ENCODE measurements at regions of chr1 and their contacts with region 1.

Region 1: GRCh38 chr1:23777979-23778814 is at the start of gene PITHD1:
- DNase-seq: peak; percentile 75 to 79
- H3K4me3 ChIP-seq: peak within 1 kb of the TSS; percentile 61
- H3K4me3 Mint-ChIP-seq: peak within 1 kb of the TSS; percentile 85
- H3K27ac Mint-ChIP-seq: peak within 1 kb of the TSS; percentile 94
- H3K4me1 ChIP-seq: peaks cover 5% of the 10 kb centered on the region; the same call in 1 of the 2 replicates
- H3K4me1 Mint-ChIP-seq: peaks cover 6% of the 10 kb centered on the region
- H3K27me3 ChIP-seq: no peaks in the 10 kb centered on the region
- H3K27me3 Mint-ChIP-seq: no peaks in the 10 kb centered on the region
- CTCF ChIP-seq: no peak
- total RNA-seq, gene PITHD1: 44.7 and 47.8 TPM in 2 replicates

Region 2: DNA sequence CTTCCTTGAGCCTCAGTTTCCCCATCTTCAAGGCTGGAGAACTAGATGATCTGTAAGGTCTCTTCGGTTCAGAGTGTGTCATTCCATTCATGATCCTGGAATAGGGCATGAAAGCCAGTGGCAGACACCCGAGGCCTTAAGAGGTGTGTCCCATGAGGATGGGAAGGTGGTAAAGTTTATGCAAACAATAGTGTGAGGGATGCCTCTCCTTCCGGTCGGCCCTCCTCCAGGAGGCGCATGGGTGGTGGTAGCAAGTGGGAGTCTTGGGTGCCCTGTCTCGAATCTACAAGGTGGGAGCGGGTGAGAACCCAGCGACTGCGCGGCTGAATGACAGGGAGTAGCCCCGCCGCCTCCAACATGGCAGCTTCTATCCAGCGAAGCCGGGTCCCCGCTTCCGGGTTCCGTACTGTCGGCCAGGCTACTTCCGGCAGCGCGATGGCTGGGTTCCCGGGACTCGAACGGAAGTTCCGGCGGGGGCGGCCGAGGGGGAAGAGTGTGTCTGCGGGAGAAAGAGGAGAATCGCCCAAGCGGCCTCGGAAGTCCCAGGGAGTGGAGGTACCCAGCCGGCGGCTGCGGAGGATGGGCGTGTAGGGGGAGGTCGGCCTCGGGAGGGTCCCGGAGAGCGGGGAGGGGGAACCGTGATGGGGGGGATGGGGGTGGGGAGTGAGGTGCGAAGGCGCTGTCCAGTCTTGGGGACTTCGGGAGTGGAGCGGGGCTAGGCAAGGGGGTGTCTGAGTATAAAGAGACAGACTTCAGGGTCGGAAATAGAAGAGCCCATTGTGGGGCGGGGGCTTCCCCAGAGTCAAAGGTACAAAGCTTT is 12.7 kb after region 1 on chr1 and contains the start of gene LYPLA2:
- CTCF ChIA-PET with region 1: interaction called, 6 read pairs
- POLR2A ChIA-PET with region 1: interaction called, 19 read pairs
- intact Hi-C with region 1: loop called (anchors 1 kb)
- DNase-seq: peak; percentile 88
- H3K4me3 ChIP-seq: peak within 1 kb of the TSS; percentile 84
- H3K4me3 Mint-ChIP-seq: peak within 1 kb of the TSS; percentile 93
- H3K27ac Mint-ChIP-seq: peak within 1 kb of the TSS; percentile 91
- H3K4me1 ChIP-seq: peaks cover 9% of the 10 kb centered on the region
- H3K4me1 Mint-ChIP-seq: no peaks in the 10 kb centered on the region
- H3K27me3 ChIP-seq: no peaks in the 10 kb centered on the region
- H3K27me3 Mint-ChIP-seq: no peaks in the 10 kb centered on the region
- CTCF ChIP-seq: no peak
- total RNA-seq, gene LYPLA2: 52.5 and 63.1 TPM in 2 replicates

Region 3: GRCh38 chr1:23800400-23801337 is 22.5 kb after region 1 on chr1 and contains the start of gene GALE:
- CTCF ChIA-PET with region 1: interaction called, 6 read pairs
- POLR2A ChIA-PET with region 1: interaction called, 20 read pairs
- intact Hi-C with region 1: no loop called
- DNase-seq: peak; percentile 91 to 94
- H3K4me3 ChIP-seq: peak within 1 kb of the TSS; percentile 96
- H3K4me3 Mint-ChIP-seq: peak within 1 kb of the TSS; percentile 91
- H3K27ac Mint-ChIP-seq: peak within 1 kb of the TSS; percentile 96
- H3K4me1 ChIP-seq: peaks cover 7% of the 10 kb centered on the region; the same call in 1 of the 2 replicates
- H3K4me1 Mint-ChIP-seq: no peaks in the 10 kb centered on the region
- H3K27me3 ChIP-seq: no peaks in the 10 kb centered on the region
- H3K27me3 Mint-ChIP-seq: no peaks in the 10 kb centered on the region
- CTCF ChIP-seq: no peak
- total RNA-seq, gene GALE: 51.6 and 57.1 TPM in 2 replicates

Region 4: GRCh38 chr1:23867953-23868556 is 89.9 kb after region 1 on chr1 and contains the start of gene FUCA1:
- CTCF ChIA-PET with region 1: no interaction called
- POLR2A ChIA-PET with region 1: no interaction called
- intact Hi-C with region 1: loop called (anchors 5 kb)
- DNase-seq: peak; percentile 94
- H3K4me3 ChIP-seq: peak within 1 kb of the TSS; percentile 68
- H3K4me3 Mint-ChIP-seq: peak within 1 kb of the TSS; percentile 82
- H3K27ac Mint-ChIP-seq: peak within 1 kb of the TSS; percentile 81
- H3K4me1 ChIP-seq: 0 out of 2 replicates have a peak, but pooled peaks cover 3% of the 10 kb centered on the region
- H3K4me1 Mint-ChIP-seq: peaks cover 8% of the 10 kb centered on the region
- H3K27me3 ChIP-seq: no peaks in the 10 kb centered on the region
- H3K27me3 Mint-ChIP-seq: no peaks in the 10 kb centered on the region
- CTCF ChIP-seq: peak; percentile 75 to 88
- total RNA-seq, gene FUCA1: 21.3 and 25.5 TPM in 2 replicates

Measured in Caco-2 (cell line).